Naive thymus-derived CD4-positive, alpha-beta T cell (primary cell): ENCODE measurements at regions of chr3 and their contacts with region 1.

Region 1: GRCh38 chr3:16849229-16849628 is 35.5 kb upstream of the PLCL2 start:
- DNase-seq: peak; percentile 20 to 74 (median 59)
- ATAC-seq: peak; percentile 89
- H3K4me3 ChIP-seq: peak overlapping the region; percentile 14
- H3K4me3 Mint-ChIP-seq: peak overlapping the region; percentile 43 to 85 (median 79)
- H3K27ac ChIP-seq: peak overlapping the region; percentile 54
- H3K27ac Mint-ChIP-seq: peak overlapping the region; percentile 69 to 92 (median 83)
- H3K4me1 ChIP-seq: peaks cover 24 to 43% of the 10 kb centered on the region in 2 donors
- H3K4me1 Mint-ChIP-seq: peaks cover 29 to 61% (median 56%) of the 10 kb centered on the region in 7 donors
- H3K27me3 ChIP-seq: no peaks in the 10 kb centered on the region
- H3K27me3 Mint-ChIP-seq: peaks cover 0 to 8% (median 0%) of the 10 kb centered on the region in 5 donors

Region 2: GRCh38 chr3:16309558-16309957 is 539.7 kb before region 1 on chr3:
- CTCF ChIA-PET with region 1: no interaction called
- POLR2A ChIA-PET with region 1: no interaction called
- intact Hi-C with region 1: loop called (anchors 5 to 10 kb)
- DNase-seq: peak in 6 of 9 donors; percentile 51 to 86 (median 59)
- ATAC-seq: peak; percentile 83
- H3K4me3 ChIP-seq: no peak overlapping the region
- H3K4me3 Mint-ChIP-seq: peak overlapping the region; percentile 25 to 90 (median 78)
- H3K27ac ChIP-seq: peak overlapping the region; percentile 48
- H3K27ac Mint-ChIP-seq: peak overlapping the region; percentile 85 to 98 (median 91)
- H3K4me1 ChIP-seq: peaks cover 92 to 94% of the 10 kb centered on the region in 2 donors
- H3K4me1 Mint-ChIP-seq: peaks cover 74 to 97% (median 92%) of the 10 kb centered on the region in 7 donors
- H3K27me3 ChIP-seq: no peaks in the 10 kb centered on the region
- H3K27me3 Mint-ChIP-seq: no peaks in the 10 kb centered on the region

Region 3: DNA sequence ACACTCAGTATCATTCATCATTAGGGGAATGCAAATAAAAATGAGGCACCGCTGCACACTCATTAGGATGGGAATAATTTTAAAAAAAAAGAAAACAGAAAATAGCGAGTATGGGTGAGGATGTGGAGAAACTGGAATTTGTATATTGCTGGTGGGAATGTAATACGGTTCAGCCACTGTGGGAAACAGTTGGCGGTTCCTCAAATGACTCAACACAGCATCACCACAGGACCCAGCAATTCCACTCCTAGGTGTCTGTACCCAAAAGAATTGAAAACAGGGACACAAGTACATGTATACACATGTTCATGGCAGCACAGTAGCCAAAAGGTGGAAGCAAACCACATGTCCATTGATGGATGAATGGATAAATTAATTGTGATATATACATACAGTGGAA is 300.5 kb before region 1 on chr3:
- CTCF ChIA-PET with region 1: no interaction called
- POLR2A ChIA-PET with region 1: no interaction called
- intact Hi-C with region 1: no loop called
- DNase-seq: no peak
- ATAC-seq: no peak
- H3K4me3 ChIP-seq: no peak overlapping the region
- H3K4me3 Mint-ChIP-seq: no peak overlapping the region
- H3K27ac ChIP-seq: no peak overlapping the region
- H3K27ac Mint-ChIP-seq: peak overlapping the region in 1 of 9 donors; percentile 25
- H3K4me1 ChIP-seq: peaks cover 0 to 4% of the 10 kb centered on the region in 2 donors
- H3K4me1 Mint-ChIP-seq: peaks cover 6 to 29% (median 7%) of the 10 kb centered on the region in 7 donors
- H3K27me3 ChIP-seq: no peaks in the 10 kb centered on the region
- H3K27me3 Mint-ChIP-seq: peaks cover 0 to 9% (median 7%) of the 10 kb centered on the region in 5 donors

Region 4: GRCh38 chr3:16864610-16865313 is 15.5 kb after region 1 on chr3:
- CTCF ChIA-PET with region 1: no interaction called
- POLR2A ChIA-PET with region 1: interaction called, 3 read pairs
- intact Hi-C with region 1: loop called in 1 of 2 experiments (anchors 2 kb)
- DNase-seq: no peak
- ATAC-seq: no peak
- H3K4me3 ChIP-seq: no peak overlapping the region
- H3K4me3 Mint-ChIP-seq: no peak overlapping the region
- H3K27ac ChIP-seq: no peak overlapping the region
- H3K27ac Mint-ChIP-seq: no peak overlapping the region
- H3K4me1 ChIP-seq: peaks cover 7 to 9% of the 10 kb centered on the region in 2 donors
- H3K4me1 Mint-ChIP-seq: peaks cover 11 to 13% (median 12%) of the 10 kb centered on the region in 7 donors
- H3K27me3 ChIP-seq: no peaks in the 10 kb centered on the region
- H3K27me3 Mint-ChIP-seq: peaks cover 0 to 47% (median 9%) of the 10 kb centered on the region in 5 donors

Region 5: DNA sequence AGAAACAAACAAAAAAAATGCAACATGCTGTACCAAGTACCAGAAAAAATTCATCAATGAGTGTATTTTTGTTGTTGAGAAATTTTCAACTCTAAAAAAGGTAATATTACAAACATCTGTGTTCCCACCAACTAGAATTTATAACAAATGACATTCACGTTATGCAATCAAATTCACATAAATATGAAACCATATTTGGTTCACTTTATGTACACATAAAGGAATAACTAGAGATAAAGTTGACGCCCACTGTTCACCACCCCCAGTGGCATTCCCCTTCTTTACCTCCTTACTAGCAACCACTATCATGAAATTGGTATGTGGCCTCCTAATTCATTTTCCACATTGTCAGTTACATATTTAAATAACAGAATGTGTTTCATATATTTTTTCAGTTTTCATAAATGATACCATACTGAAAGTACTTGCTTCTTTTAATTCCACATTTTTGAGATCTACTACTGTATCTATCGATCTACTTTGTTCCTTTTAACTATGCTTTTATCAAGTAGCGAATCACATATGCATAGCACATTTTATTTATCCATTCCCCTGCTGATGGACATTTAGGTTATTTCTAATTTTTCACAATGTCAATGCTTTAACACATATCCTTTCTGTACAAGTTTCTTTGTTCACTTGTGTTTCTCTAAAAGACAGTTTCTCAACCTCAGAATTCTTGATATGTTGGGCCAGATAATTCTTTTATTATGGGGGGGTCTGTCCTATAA is 858.7 kb after region 1 on chr3:
- CTCF ChIA-PET with region 1: no interaction called
- POLR2A ChIA-PET with region 1: no interaction called
- intact Hi-C with region 1: no loop called
- DNase-seq: no peak
- ATAC-seq: no peak
- H3K4me3 ChIP-seq: no peak overlapping the region
- H3K4me3 Mint-ChIP-seq: no peak overlapping the region
- H3K27ac ChIP-seq: no peak overlapping the region
- H3K27ac Mint-ChIP-seq: no peak overlapping the region
- H3K4me1 ChIP-seq: no peaks in the 10 kb centered on the region
- H3K4me1 Mint-ChIP-seq: peaks cover 0 to 18% (median 14%) of the 10 kb centered on the region in 7 donors
- H3K27me3 ChIP-seq: no peaks in the 10 kb centered on the region
- H3K27me3 Mint-ChIP-seq: no peaks in the 10 kb centered on the region